Ovary (tissue), 10 donors: ENCODE measurements at regions of chr3 and their contacts with region 1.

Region 1: GRCh38 chr3:130088061-130088460 is 6.4 kb downstream of the ALG1L2 start:
- DNase-seq: no peak
- H3K4me3 ChIP-seq: no peak overlapping the region
- H3K27ac ChIP-seq: no peak overlapping the region
- H3K4me1 ChIP-seq: no peaks in the 10 kb centered on the region
- H3K27me3 ChIP-seq: no peaks in the 10 kb centered on the region
- CTCF ChIP-seq: no peak
- EP300 ChIP-seq: no peak
- POLR2A ChIP-seq: no peak

Region 2: DNA sequence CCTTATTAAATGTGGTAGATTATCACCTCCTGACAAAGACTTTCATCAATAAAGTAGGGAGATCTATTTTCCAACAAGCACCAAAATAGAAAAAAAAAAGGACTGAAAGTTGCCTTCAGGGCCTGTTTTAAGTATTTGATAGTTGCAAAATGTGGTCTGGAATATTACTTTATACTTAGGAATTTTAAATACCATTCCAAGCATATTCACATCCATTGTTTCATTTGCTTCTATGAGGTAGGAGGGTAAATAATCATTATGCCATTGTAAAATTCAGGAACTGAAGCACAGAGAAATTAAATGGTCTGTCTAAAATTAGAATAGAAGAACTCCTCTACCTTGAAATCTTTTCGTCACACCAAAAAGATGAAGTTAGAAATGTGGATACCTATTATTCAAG is 304.6 kb before region 1 on chr3:
- intact Hi-C with region 1: no loop called
- DNase-seq: no peak
- H3K4me3 ChIP-seq: no peak overlapping the region
- H3K27ac ChIP-seq: no peak overlapping the region
- H3K4me1 ChIP-seq: peaks cover 5% of the 10 kb centered on the region
- H3K27me3 ChIP-seq: no peaks in the 10 kb centered on the region
- CTCF ChIP-seq: no peak
- EP300 ChIP-seq: no peak
- POLR2A ChIP-seq: no peak

Region 3: DNA sequence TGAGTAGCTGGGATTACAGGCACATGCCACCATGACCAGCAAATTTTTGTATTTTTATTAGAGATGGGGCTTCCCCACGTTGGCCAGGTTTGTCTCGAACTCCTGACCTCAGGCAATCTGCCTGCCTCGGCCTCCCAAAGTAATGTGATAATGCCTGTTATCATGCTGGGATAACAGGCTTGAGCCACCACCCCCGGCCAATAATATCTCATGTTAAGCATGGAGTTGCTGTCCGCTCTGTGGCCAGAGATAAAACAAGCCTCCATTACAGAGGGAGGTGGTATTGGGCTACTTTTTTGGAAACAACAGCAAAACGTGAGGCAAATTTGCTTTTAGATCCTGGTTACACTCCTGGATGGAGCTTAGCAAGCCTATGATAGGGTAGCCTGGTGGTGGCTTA is 39.3 kb before region 1 on chr3:
- intact Hi-C with region 1: loop called in 2 of 4 experiments (anchors 2 kb)
- DNase-seq: no peak
- H3K4me3 ChIP-seq: no peak overlapping the region
- H3K27ac ChIP-seq: no peak overlapping the region
- H3K4me1 ChIP-seq: no peaks in the 10 kb centered on the region
- H3K27me3 ChIP-seq: no peaks in the 10 kb centered on the region
- CTCF ChIP-seq: no peak
- EP300 ChIP-seq: no peak
- POLR2A ChIP-seq: no peak

Region 4: DNA sequence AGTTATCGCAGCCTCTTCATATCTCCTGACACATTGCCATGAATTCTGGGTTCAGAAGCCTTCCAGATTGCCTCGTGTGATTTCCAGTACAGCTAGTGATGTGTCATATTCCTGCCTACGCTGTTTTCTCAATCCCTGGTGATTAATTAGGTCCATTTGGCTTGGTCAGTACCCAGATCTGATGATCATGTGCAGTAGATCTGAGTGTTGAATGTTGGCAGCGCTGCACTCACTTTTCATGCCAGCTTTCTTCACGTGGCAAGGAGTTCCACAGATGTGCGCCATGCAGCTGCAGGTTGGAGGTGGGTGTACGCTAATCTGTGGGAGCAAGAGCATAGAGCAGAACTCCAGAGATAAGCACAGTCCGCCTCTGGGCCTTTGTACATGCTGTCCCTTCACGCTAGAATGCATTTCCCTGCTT is 170.5 kb after region 1 on chr3:
- intact Hi-C with region 1: no loop called
- DNase-seq: peak in 1 of 5 donors; percentile 44
- H3K4me3 ChIP-seq: no peak overlapping the region
- H3K27ac ChIP-seq: no peak overlapping the region
- H3K4me1 ChIP-seq: peaks cover 2% of the 10 kb centered on the region
- H3K27me3 ChIP-seq: no peaks in the 10 kb centered on the region
- CTCF ChIP-seq: no peak
- EP300 ChIP-seq: no peak
- POLR2A ChIP-seq: no peak